K562 (cell line): ENCODE measurements at regions of chr2 and their contacts with region 1.

Region 1: GRCh38 chr2:170361090-170361936 is 183.4 kb downstream of the MYO3B start:
- DNase-seq: peak; percentile 57 to 90 (median 64)
- ATAC-seq: peak; percentile 85
- H3K4me3 ChIP-seq: 0 out of 2 replicates have a peak overlapping the region, but pooled peaks have one; percentile 0
- H3K27ac ChIP-seq: peak overlapping the region; percentile 75
- H3K4me1 ChIP-seq: peaks cover 0 to 56% of the 10 kb centered on the region in 2 experiments; a peak in 4 of 5 replicates
- H3K27me3 ChIP-seq: no peaks in the 10 kb centered on the region
- CTCF ChIP-seq: peak; percentile 81 to 95 (median 89)
- EP300 ChIP-seq: no peak
- POLR2A ChIP-seq: no peak
- RAD21 ChIP-seq: peak; percentile 75 to 83

Region 2: DNA sequence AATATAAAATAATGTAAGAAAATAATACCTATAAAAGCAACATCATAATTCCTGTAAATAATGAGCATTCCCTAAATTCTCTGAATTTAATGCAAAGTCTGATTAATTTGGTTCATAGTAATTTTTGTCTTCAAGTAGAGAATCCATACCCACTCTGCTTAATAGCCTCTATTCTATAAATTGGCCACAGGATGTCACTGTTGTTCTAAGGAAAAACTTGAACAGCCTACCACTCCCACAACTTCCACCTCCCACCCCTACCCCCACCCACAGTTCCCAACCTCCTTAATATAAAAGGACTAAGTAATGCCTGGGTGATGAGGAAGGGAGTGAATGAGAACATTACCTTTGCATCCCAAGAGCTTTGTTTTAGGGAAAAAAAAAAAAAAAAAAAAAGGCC is 909.2 kb before region 1 on chr2:
- CTCF ChIA-PET with region 1: no interaction called
- POLR2A ChIA-PET with region 1: no interaction called
- in situ Hi-C with region 1: no loop called
- intact Hi-C with region 1: loop called (anchors 5 kb)
- DNase-seq: peak; percentile 51 to 78 (median 58)
- ATAC-seq: peak; percentile 97
- H3K4me3 ChIP-seq: no peak overlapping the region
- H3K27ac ChIP-seq: no peak overlapping the region
- H3K4me1 ChIP-seq: no peaks in the 10 kb centered on the region; a peak in 1 of 5 replicates
- H3K27me3 ChIP-seq: no peaks in the 10 kb centered on the region
- CTCF ChIP-seq: peak; percentile 34 to 76 (median 49); a peak in 4 of 6 replicates
- EP300 ChIP-seq: no peak
- POLR2A ChIP-seq: no peak
- RAD21 ChIP-seq: peak; percentile 57 to 71

Region 3: DNA sequence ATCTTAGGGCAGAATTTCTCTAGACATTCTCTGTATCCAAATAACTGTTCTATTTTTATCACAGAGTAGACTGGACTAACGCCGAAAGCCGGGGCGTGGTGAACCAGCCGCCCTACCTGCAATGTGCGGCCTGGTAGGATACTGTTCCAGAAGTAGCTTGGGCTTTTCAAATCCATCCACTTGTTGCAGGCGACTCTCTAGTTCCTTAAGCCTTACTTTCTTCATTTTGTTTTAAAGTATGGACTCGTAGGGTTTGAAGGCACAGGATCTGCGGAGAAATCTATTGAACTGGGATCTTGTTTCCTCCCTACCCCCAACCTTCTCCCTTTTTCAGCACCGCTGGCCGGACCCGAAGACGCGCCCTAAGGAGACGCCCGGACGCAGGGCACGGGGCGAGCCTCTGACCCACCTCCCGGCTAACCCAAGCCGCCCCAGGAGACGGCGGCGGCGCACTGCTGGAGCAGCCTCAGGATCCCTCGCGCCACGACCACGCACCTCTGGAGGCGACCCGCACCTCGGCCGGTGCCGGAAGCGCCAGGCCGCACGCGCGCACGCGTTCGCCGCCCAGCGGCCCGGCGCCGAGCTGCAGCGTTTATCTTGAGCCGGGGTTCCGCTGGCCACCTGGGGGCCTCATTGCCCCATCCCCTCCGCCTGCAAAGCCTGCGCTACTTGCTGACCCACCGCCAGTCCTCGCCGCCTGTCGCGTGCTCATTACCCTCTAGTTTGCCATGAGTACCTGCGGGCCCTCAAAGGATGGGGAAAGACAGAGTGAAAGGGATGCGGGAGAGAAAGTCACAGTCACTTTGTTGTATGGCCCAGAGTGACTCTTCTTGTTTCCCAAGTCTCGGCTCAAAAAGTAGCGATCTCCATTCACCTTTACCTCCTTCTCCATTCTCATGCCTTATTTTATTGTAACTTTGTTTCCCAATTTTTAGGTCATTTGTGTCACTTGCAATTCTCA is 536.7 kb before region 1 on chr2 and contains the start of gene METTL5:
- CTCF ChIA-PET with region 1: no interaction called
- POLR2A ChIA-PET with region 1: no interaction called
- in situ Hi-C with region 1: no loop called
- intact Hi-C with region 1: loop called (anchors 10 kb)
- DNase-seq: peak; percentile 92 to 96 (median 94)
- ATAC-seq: peak; percentile 72
- H3K4me3 ChIP-seq: peak within 1 kb of the TSS; percentile 65
- H3K27ac ChIP-seq: peak within 1 kb of the TSS; percentile 79
- H3K4me1 ChIP-seq: peaks cover 12 to 30% of the 10 kb centered on the region in 2 experiments; a peak in 4 of 5 replicates
- H3K27me3 ChIP-seq: no peaks in the 10 kb centered on the region
- CTCF ChIP-seq: peak; percentile 99 to 100 (median 100)
- EP300 ChIP-seq: peak; percentile 57
- POLR2A ChIP-seq: peak; percentile 91
- RAD21 ChIP-seq: peak; percentile 100
- polyA plus RNA-seq, gene METTL5: 366 to 471 TPM

Region 4: GRCh38 chr2:170005484-170006101 is 355.7 kb before region 1 on chr2:
- CTCF ChIA-PET with region 1: interaction called, 4 read pairs
- POLR2A ChIA-PET with region 1: no interaction called
- in situ Hi-C with region 1: no loop called
- intact Hi-C with region 1: loop called (anchors 10 kb)
- DNase-seq: peak in 3 of 4 experiments; percentile 19 to 72 (median 66)
- ATAC-seq: peak; percentile 92
- H3K4me3 ChIP-seq: no peak overlapping the region
- H3K27ac ChIP-seq: no peak overlapping the region
- H3K4me1 ChIP-seq: peaks cover 4 to 11% of the 10 kb centered on the region in 2 experiments
- H3K27me3 ChIP-seq: no peaks in the 10 kb centered on the region
- CTCF ChIP-seq: peak; percentile 76 to 93 (median 76)
- EP300 ChIP-seq: no peak
- POLR2A ChIP-seq: no peak
- RAD21 ChIP-seq: peak; percentile 85 to 95

Region 5: GRCh38 chr2:170262806-170263205 is 98.5 kb before region 1 on chr2:
- CTCF ChIA-PET with region 1: no interaction called
- POLR2A ChIA-PET with region 1: no interaction called
- in situ Hi-C with region 1: no loop called
- intact Hi-C with region 1: loop called (anchors 1 kb)
- DNase-seq: no peak
- ATAC-seq: no peak
- H3K4me3 ChIP-seq: no peak overlapping the region
- H3K27ac ChIP-seq: peak overlapping the region; percentile 86; the same call in 1 of the 3 replicates
- H3K4me1 ChIP-seq: peaks cover 26 to 48% of the 10 kb centered on the region in 2 experiments
- H3K27me3 ChIP-seq: no peaks in the 10 kb centered on the region
- CTCF ChIP-seq: no peak
- EP300 ChIP-seq: no peak
- POLR2A ChIP-seq: no peak
- RAD21 ChIP-seq: no peak

Region 6: GRCh38 chr2:170324640-170325046 is 36.7 kb before region 1 on chr2:
- CTCF ChIA-PET with region 1: interaction called, 3 read pairs
- POLR2A ChIA-PET with region 1: interaction called, 3 read pairs
- in situ Hi-C with region 1: no loop called
- intact Hi-C with region 1: loop called (anchors 1 kb)
- DNase-seq: peak; percentile 42 to 85 (median 60)
- ATAC-seq: peak; percentile 95
- H3K4me3 ChIP-seq: no peak overlapping the region
- H3K27ac ChIP-seq: no peak overlapping the region
- H3K4me1 ChIP-seq: peaks cover 0 to 22% of the 10 kb centered on the region in 2 experiments; a peak in 4 of 5 replicates
- H3K27me3 ChIP-seq: no peaks in the 10 kb centered on the region
- CTCF ChIP-seq: peak; percentile 93 to 95 (median 93)
- EP300 ChIP-seq: peak; percentile 45; the same call in 1 of the 2 replicates
- POLR2A ChIP-seq: no peak
- RAD21 ChIP-seq: peak; percentile 99